Adrenal gland (tissue), 19 donors: ENCODE measurements at regions of chr11 and their contacts with region 1.

Region 1: GRCh38 chr11:44043157-44043556 is 4.6 kb upstream of the ACCSL start:
- DNase-seq: no peak
- H3K4me3 ChIP-seq: no peak overlapping the region
- H3K27ac ChIP-seq: no peak overlapping the region
- H3K4me1 ChIP-seq: no peaks in the 10 kb centered on the region
- H3K27me3 ChIP-seq: no peaks in the 10 kb centered on the region
- CTCF ChIP-seq: no peak
- POLR2A ChIP-seq: no peak

Region 2: DNA sequence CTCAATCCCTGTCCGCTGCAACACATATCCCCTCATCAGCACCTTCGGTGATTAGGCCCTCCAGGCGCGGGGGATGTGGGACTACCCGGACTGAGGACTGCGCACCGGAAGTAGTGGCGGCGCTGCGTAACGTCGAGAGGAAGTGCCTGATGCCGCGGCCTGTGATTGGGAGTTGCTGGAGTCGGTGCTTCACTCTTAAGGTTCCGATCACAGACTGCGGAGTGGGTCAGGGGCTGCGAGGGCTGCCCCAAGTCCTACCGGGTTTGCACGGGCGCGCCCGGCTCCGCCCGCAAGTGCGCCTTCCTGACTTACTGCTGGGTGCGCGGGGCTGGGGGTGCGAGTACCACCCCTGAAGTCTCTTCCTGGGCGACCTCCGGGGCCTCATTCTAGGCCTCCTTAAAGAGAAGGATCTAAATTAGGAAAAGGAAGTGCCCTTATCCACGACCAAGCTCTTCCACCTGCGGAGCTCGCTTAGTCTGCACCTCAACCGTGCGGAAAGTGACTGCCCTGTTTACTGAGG is 162.5 kb before region 1 on chr11 and contains the start of gene ALKBH3:
- intact Hi-C with region 1: loop called in 1 of 2 experiments (anchors 5 kb)
- DNase-seq: peak; percentile 88 to 97 (median 94)
- H3K4me3 ChIP-seq: peak within 1 kb of the TSS; percentile 66 to 96 (median 78)
- H3K27ac ChIP-seq: peak within 1 kb of the TSS in 3 of 5 donors; percentile 29 to 79 (median 60)
- H3K4me1 ChIP-seq: peaks cover 14 to 21% of the 10 kb centered on the region in 2 donors
- H3K27me3 ChIP-seq: peaks cover 10% of the 10 kb centered on the region
- CTCF ChIP-seq: peak in 3 of 6 experiments; percentile 18 to 30 (median 26)
- POLR2A ChIP-seq: peak; percentile 21 to 54
- total RNA-seq, gene ALKBH3: 19.7 to 45.3 (median 29.0) TPM

Region 3: GRCh38 chr11:43979571-43980190 is 63.5 kb before region 1 on chr11:
- intact Hi-C with region 1: no loop called
- DNase-seq: peak in 1 of 7 donors; percentile 53
- H3K4me3 ChIP-seq: no peak overlapping the region
- H3K27ac ChIP-seq: peak overlapping the region in 1 of 5 donors; percentile 1
- H3K4me1 ChIP-seq: peaks cover 29 to 49% of the 10 kb centered on the region in 2 donors
- H3K27me3 ChIP-seq: no peaks in the 10 kb centered on the region
- CTCF ChIP-seq: no peak
- POLR2A ChIP-seq: no peak

Region 4: DNA sequence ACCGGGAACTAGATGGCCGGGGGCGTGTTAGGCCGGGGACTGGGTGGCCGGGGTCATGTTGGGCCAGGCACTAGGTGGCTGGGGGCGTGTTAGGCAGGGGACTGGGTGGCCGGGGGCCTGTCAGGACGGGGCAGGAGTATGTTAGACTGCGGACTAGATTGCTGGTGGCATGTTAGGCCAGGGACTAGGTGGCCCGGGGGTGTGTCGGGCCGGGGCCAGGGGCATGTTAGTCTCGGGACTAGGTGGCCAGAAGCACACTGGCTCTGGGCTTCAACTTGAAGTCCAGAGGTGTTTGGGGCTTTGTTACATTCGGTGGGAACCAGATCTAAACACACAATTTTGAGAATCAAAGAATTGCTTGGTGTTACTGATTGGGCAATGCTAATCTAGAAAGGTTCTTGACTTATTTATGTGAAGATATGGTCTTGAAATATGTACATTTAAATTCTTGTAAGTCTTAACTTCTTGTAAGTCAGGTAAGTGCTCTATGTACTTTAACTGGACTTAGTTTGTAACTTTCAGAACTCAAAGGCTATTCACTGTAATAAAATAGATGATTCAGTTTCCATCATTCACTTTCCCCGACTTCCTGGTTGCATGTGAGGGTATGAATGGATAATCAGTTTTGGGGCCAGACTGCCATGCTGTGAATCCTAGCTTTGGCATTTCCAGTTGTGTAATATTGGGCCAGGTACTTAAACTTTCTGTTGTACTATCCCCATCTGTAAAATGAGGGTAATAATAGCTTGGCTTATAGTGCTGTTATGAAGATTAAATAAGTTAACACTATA is 53.4 kb after region 1 on chr11:
- intact Hi-C with region 1: no loop called
- DNase-seq: no peak
- H3K4me3 ChIP-seq: peak overlapping the region; percentile 77 to 94 (median 88)
- H3K27ac ChIP-seq: no peak overlapping the region
- H3K4me1 ChIP-seq: peaks cover 6 to 21% of the 10 kb centered on the region in 2 donors
- H3K27me3 ChIP-seq: no peaks in the 10 kb centered on the region
- CTCF ChIP-seq: no peak
- POLR2A ChIP-seq: no peak